ENCODE measurements at regions of chr21 and their contacts with region 1.

Region 1: DNA sequence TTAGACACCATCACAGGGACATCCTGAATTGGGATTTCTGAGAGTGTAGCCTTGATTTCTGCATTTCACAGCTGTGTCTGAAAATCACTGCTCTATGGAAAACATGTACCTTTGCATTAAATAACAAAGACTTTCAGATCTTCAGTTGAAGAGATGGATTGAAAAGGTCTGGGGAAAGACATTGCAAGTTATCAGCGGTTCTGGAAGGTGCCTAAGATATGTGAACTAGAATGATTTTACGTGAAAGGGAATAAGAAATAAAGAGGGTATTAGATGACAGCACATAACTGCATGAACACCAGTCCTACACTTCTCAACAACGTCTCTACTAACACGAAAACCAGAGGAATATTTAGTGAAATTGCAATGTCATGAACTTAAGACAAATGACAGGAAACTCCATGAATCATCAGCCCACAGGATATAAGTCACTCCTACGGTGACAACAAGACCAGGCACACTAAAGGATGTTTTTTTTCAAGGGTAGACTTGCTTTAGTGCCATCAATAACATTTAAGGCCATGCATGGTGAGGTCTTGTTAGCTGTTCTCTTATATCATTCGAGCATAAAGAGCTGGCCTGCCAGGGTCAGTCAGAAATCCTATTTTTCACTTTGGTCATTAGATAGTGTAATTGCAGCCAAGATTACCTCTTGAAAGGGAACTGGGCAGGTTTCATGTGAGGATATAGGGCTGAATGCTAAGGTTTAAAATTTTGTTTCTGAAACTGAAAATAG is 283.1 kb downstream of the GRIK1 start:
- DNase-seq: peak; percentile 21
- H3K4me3 Mint-ChIP-seq: peak overlapping the region; percentile 33
- H3K27ac Mint-ChIP-seq: peak overlapping the region; percentile 83
- H3K4me1 Mint-ChIP-seq: peaks cover 29% of the 10 kb centered on the region
- H3K27me3 Mint-ChIP-seq: peaks cover 9% of the 10 kb centered on the region

Region 2: DNA sequence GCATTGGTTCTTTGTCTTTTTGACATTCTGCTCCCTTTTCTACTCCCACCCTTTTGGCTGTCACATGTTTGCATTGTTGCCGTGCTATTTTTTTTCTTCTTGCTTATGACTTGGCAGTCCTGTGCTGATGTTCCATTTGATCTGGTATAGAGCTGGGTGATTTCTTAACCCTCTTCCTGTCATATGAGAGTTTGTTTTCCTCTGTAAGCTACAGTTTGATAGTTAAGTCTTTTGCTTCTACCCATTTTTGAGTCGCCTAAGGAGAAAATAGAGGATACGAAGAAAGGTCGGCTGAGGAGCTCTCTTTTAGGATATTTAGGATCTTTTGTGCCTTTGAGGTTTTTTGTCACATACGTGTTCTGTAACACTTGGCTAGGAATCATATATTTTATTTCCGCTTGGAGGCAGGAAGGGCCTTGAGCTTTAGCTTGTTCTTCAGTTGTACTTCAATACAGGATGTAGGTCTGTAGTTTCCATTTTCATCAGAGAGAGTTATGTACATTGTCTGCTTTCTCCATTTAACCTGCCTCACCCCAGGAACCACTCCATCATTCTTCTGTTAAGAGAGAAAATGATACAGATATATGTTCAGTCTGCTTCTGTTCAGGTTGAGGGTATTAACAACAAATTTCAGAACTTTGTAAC is 207.2 kb before region 1 on chr21:
- CTCF ChIA-PET with region 1: no interaction called
- intact Hi-C with region 1: loop called (anchors 2 kb)
- DNase-seq: peak; percentile 16
- H3K4me3 Mint-ChIP-seq: peak overlapping the region; percentile 46
- H3K27ac Mint-ChIP-seq: peak overlapping the region; percentile 92
- H3K4me1 Mint-ChIP-seq: peaks cover 17% of the 10 kb centered on the region
- H3K27me3 Mint-ChIP-seq: no peaks in the 10 kb centered on the region

Region 3: GRCh38 chr21:29477941-29478340 is 178.7 kb before region 1 on chr21:
- CTCF ChIA-PET with region 1: interaction called, 3 read pairs
- intact Hi-C with region 1: loop called (anchors 5 kb)
- DNase-seq: no peak
- H3K4me3 Mint-ChIP-seq: no peak overlapping the region
- H3K27ac Mint-ChIP-seq: no peak overlapping the region
- H3K4me1 Mint-ChIP-seq: peaks cover 10% of the 10 kb centered on the region
- H3K27me3 Mint-ChIP-seq: no peaks in the 10 kb centered on the region

Region 4: DNA sequence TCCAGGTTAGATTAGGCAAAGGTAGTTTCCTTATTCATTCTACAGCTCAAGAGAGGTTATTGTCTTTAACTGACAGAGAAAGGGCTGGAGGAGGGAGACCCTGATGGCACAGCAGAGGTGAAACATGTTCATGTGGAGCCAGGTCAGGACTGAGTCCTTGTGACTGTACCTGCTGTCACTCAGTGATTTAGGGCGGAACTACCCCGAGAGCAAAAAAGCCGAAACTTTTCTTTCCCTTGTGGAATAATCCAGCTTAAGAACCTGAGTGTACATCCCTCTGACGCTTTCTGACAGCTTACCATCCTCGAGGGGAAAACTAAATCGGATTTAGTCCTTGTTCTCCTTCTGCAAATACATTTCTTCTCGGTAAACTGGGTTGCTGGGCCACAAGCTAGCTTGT is 84.7 kb before region 1 on chr21:
- CTCF ChIA-PET with region 1: no interaction called
- intact Hi-C with region 1: no loop called
- DNase-seq: no peak
- H3K4me3 Mint-ChIP-seq: no peak overlapping the region
- H3K27ac Mint-ChIP-seq: no peak overlapping the region
- H3K4me1 Mint-ChIP-seq: no peaks in the 10 kb centered on the region
- H3K27me3 Mint-ChIP-seq: no peaks in the 10 kb centered on the region

Measured in activated naive CD4-positive, alpha-beta T cell treated with anti-CD3 and anti-CD28 coated beads for 36 hours (primary cell).